Activated naive CD4-positive, alpha-beta T cell treated with anti-CD3 and anti-CD28 coated beads for 36 hours (primary cell): ENCODE measurements at regions of chr2 and their contacts with region 1.

Region 1: GRCh38 chr2:39124000-39124745 is 3.3 kb upstream of the SOS1 start:
- DNase-seq: peak; percentile 96
- H3K4me3 Mint-ChIP-seq: peak overlapping the region; percentile 88
- H3K27ac Mint-ChIP-seq: peak overlapping the region; percentile 97
- H3K4me1 Mint-ChIP-seq: peaks cover 39% of the 10 kb centered on the region
- H3K27me3 Mint-ChIP-seq: no peaks in the 10 kb centered on the region

Region 2: DNA sequence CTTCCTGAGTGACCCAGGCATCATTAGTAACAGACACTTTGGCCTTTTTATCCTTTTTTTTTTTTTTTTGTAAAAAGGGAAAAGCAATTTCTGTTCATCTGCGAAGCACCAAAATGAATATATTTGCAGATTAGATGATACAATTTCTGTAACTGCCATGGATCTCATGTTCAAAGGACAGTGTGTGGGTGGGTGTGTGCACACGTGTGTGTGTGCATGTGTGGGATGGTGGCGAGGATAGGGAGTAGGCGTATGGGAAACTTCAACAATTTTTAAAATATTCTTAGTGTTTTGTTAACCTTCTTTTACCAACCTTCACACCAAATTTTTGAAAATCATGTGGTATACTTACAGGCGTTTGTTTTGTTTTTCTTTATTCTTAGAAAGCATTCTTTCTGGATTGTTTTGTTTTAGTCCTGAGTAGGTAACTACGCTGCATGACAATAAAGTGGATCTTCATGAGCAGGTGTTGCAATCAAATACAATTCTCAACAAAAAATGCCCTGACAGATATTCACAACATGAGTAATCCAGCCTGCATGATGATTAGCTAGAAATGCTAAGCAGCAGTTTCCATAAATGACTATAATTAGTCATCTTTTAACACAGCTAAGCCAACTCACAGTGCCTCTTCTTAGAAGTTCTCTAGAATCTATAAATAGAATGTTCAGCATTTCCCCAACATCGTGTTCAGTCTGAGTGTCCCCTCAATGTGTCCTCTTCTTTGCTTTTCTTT is 1252.5 kb before region 1 on chr2:
- CTCF ChIA-PET with region 1: no interaction called
- intact Hi-C with region 1: loop called (anchors 5 kb)
- DNase-seq: no peak
- H3K4me3 Mint-ChIP-seq: peak overlapping the region; percentile 25
- H3K27ac Mint-ChIP-seq: peak overlapping the region; percentile 86
- H3K4me1 Mint-ChIP-seq: peaks cover 30% of the 10 kb centered on the region
- H3K27me3 Mint-ChIP-seq: peaks cover 12% of the 10 kb centered on the region

Region 3: GRCh38 chr2:38665854-38666555 is 458.2 kb before region 1 on chr2 and contains the start of gene GALM:
- CTCF ChIA-PET with region 1: no interaction called
- intact Hi-C with region 1: loop called (anchors 1 kb)
- DNase-seq: peak; percentile 68
- H3K4me3 Mint-ChIP-seq: peak within 1 kb of the TSS; percentile 83
- H3K27ac Mint-ChIP-seq: peak within 1 kb of the TSS; percentile 97
- H3K4me1 Mint-ChIP-seq: peaks cover 69% of the 10 kb centered on the region
- H3K27me3 Mint-ChIP-seq: no peaks in the 10 kb centered on the region
- total RNA-seq, gene GALM: 31.3 to 31.9 TPM

Region 4: DNA sequence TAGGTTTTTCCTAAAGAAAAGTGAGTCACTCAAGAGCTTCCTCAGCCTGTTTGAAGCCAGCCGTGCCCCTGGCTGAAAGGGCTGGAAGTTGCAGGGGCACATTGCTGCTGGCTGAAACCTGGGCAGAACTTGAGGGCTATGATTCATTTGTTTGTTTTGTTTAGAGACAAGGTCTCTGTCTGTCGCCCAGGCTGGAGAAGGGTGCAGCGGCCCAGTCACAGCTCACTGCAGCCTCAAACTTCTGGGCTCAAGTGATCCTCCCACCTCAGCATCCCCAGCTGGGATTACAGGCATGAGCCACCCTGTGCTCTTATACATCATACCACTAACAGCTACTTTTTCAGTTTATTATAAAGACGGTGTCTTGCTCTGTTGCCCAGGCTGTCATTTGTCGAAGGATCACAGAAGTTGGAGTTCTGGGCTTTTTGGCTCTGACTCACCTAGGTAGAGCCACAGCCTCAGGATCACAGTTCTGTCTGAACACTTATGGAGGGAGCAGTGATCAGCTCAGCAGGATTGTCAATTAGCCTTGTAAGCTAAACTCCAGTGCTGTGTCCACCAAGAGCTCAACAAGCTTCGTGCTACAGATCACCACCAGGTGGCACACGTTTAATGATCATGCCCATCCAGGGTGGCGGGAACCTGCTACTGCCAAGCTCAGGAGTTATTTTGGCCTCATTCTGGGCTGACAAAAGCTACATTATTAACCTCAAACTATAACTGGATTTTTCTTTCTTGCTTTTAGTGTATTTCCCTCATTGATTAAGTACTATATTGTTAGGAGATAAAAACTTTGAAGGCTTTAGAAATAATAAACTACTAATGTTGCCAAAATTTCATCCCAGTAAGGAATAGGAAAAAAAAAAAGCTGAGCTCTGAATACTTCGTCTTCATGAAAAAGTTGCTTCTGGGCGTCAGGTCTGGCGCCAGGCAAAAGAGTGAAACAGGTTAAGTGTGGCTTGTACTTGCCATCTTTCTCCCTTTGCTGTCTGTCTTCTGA is 176.6 kb before region 1 on chr2:
- CTCF ChIA-PET with region 1: interaction called, 5 read pairs
- intact Hi-C with region 1: loop called (anchors 2 kb)
- DNase-seq: peak; percentile 85
- H3K4me3 Mint-ChIP-seq: no peak overlapping the region
- H3K27ac Mint-ChIP-seq: no peak overlapping the region
- H3K4me1 Mint-ChIP-seq: no peaks in the 10 kb centered on the region
- H3K27me3 Mint-ChIP-seq: no peaks in the 10 kb centered on the region

Region 5: GRCh38 chr2:39107719-39108273 is 16.4 kb before region 1 on chr2:
- CTCF ChIA-PET with region 1: interaction called, 10 read pairs
- intact Hi-C with region 1: no loop called
- DNase-seq: no peak
- H3K4me3 Mint-ChIP-seq: no peak overlapping the region
- H3K27ac Mint-ChIP-seq: no peak overlapping the region
- H3K4me1 Mint-ChIP-seq: peaks cover 48% of the 10 kb centered on the region
- H3K27me3 Mint-ChIP-seq: no peaks in the 10 kb centered on the region

Region 6: DNA sequence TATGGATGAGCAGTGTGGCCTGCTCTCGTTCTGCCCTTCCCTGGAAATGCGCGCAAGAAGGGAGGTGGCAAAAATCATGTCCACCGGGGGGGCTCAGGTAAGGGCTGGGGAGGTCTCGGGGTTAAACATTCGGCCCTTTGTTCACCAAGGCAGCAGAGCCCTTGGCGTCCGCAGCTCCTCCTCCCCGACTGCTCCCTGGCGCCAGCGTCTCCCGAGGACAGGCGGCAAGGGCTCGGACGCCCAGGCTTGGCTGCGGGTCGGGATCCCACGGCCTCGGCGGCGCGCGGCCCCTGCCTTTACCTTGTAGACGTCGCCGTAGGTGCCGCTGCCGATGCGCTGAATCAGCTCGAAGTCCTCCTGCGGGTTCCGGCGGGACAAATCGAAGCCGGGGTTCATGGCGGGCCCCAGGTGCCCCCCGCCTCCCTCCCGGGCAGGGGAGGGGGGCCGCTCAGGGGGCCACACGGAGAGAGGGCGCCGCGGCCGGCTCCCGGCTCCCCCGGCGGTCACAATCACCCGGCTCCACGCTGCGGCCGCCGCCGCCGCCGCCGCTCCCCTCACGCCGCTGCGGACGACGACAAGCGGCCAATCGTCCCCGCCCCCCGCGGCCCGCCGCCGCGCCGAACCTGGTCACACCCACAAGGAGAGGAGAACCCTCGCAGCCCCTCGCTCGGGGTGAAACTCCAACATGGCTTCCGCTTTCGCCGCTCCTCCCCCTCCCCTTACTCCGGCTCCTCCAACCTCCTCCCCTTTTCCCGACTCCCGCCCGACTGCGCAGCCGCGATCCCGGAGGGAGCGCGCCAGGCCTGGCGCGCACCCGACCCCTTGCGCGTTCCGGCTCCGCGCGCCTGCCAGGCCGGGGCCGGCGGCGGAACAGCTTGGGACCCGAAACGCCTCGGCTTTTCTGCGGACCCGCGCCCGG is 312.7 kb after region 1 on chr2 and contains the start of gene MAP4K3:
- CTCF ChIA-PET with region 1: no interaction called
- intact Hi-C with region 1: loop called (anchors 2 kb)
- DNase-seq: peak; percentile 86
- H3K4me3 Mint-ChIP-seq: peak within 1 kb of the TSS; percentile 87
- H3K27ac Mint-ChIP-seq: peak within 1 kb of the TSS; percentile 83
- H3K4me1 Mint-ChIP-seq: peaks cover 66% of the 10 kb centered on the region
- H3K27me3 Mint-ChIP-seq: no peaks in the 10 kb centered on the region
- total RNA-seq, gene MAP4K3: 10.6 to 12.0 TPM